CD8-positive, alpha-beta T cell (primary cell): ENCODE measurements at regions of chr2 and their contacts with region 1.

Region 1: GRCh38 chr2:201257956-201258665 is 2.2 kb upstream of the CASP8 start:
- DNase-seq: peak; percentile 87 to 99 (median 94)
- ATAC-seq: peak; percentile 69
- H3K4me3 ChIP-seq: peak overlapping the region; percentile 45 to 48
- H3K4me3 Mint-ChIP-seq: peak overlapping the region; percentile 89
- H3K27ac ChIP-seq: peak overlapping the region; percentile 85 to 93
- H3K27ac Mint-ChIP-seq: peak overlapping the region; percentile 97
- H3K4me1 ChIP-seq: peaks cover 68% of the 10 kb centered on the region
- H3K4me1 Mint-ChIP-seq: peaks cover 75% of the 10 kb centered on the region
- H3K27me3 ChIP-seq: no peaks in the 10 kb centered on the region
- H3K27me3 Mint-ChIP-seq: no peaks in the 10 kb centered on the region
- CTCF ChIP-seq: no peak

Region 2: GRCh38 chr2:201270293-201271001 is 12.3 kb after region 1 on chr2:
- CTCF ChIA-PET with region 1: interaction called, 19 read pairs
- POLR2A ChIA-PET with region 1: interaction called, 4 read pairs
- intact Hi-C with region 1: loop called in 1 of 2 experiments (anchors 1 kb)
- DNase-seq: no peak
- ATAC-seq: no peak
- H3K4me3 ChIP-seq: no peak overlapping the region
- H3K4me3 Mint-ChIP-seq: no peak overlapping the region
- H3K27ac ChIP-seq: no peak overlapping the region
- H3K27ac Mint-ChIP-seq: peak overlapping the region; percentile 68
- H3K4me1 ChIP-seq: peaks cover 56% of the 10 kb centered on the region
- H3K4me1 Mint-ChIP-seq: peaks cover 73% of the 10 kb centered on the region
- H3K27me3 ChIP-seq: no peaks in the 10 kb centered on the region
- H3K27me3 Mint-ChIP-seq: no peaks in the 10 kb centered on the region
- CTCF ChIP-seq: no peak

Region 3: GRCh38 chr2:201363857-201364560 is 105.9 kb after region 1 on chr2:
- CTCF ChIA-PET with region 1: interaction called, 42 read pairs
- POLR2A ChIA-PET with region 1: interaction called, 3 read pairs
- intact Hi-C with region 1: loop called in 1 of 2 experiments (anchors 1 kb)
- DNase-seq: peak in 5 of 9 experiments; percentile 12 to 75 (median 60)
- ATAC-seq: peak; percentile 98
- H3K4me3 ChIP-seq: no peak overlapping the region
- H3K4me3 Mint-ChIP-seq: no peak overlapping the region
- H3K27ac ChIP-seq: no peak overlapping the region
- H3K27ac Mint-ChIP-seq: peak overlapping the region; percentile 37
- H3K4me1 ChIP-seq: peaks cover 31% of the 10 kb centered on the region
- H3K4me1 Mint-ChIP-seq: peaks cover 34% of the 10 kb centered on the region
- H3K27me3 ChIP-seq: no peaks in the 10 kb centered on the region
- H3K27me3 Mint-ChIP-seq: no peaks in the 10 kb centered on the region
- CTCF ChIP-seq: peak; percentile 87